ENCODE measurements at regions of chr1 and their contacts with region 1.

Region 1: GRCh38 chr1:241356519-241357365 is at the start of gene RGS7:
- DNase-seq: peak; percentile 52 to 60
- H3K4me3 ChIP-seq: peak within 1 kb of the TSS; percentile 50
- H3K4me3 Mint-ChIP-seq: peak within 1 kb of the TSS; percentile 53
- H3K27ac Mint-ChIP-seq: no peak within 1 kb of the TSS
- H3K4me1 ChIP-seq: no peaks in the 10 kb centered on the region
- H3K4me1 Mint-ChIP-seq: no peaks in the 10 kb centered on the region
- H3K27me3 ChIP-seq: peaks cover 2% of the 10 kb centered on the region
- H3K27me3 Mint-ChIP-seq: peaks cover 19% of the 10 kb centered on the region
- CTCF ChIP-seq: no peak
- total RNA-seq, gene RGS7: not detected in 2 replicates

Region 2: GRCh38 chr1:241323514-241324195 is 33.1 kb before region 1 on chr1:
- CTCF ChIA-PET with region 1: no interaction called
- POLR2A ChIA-PET with region 1: no interaction called
- intact Hi-C with region 1: loop called (anchors 1 kb)
- DNase-seq: peak; percentile 38 to 74
- H3K4me3 ChIP-seq: no peak overlapping the region
- H3K4me3 Mint-ChIP-seq: no peak overlapping the region
- H3K27ac Mint-ChIP-seq: no peak overlapping the region
- H3K4me1 ChIP-seq: no peaks in the 10 kb centered on the region
- H3K4me1 Mint-ChIP-seq: no peaks in the 10 kb centered on the region
- H3K27me3 ChIP-seq: no peaks in the 10 kb centered on the region
- H3K27me3 Mint-ChIP-seq: peaks cover 8% of the 10 kb centered on the region
- CTCF ChIP-seq: no peak

Region 3: GRCh38 chr1:241376701-241377100 is 20.0 kb after region 1 on chr1:
- CTCF ChIA-PET with region 1: no interaction called
- POLR2A ChIA-PET with region 1: no interaction called
- intact Hi-C with region 1: no loop called
- DNase-seq: no peak
- H3K4me3 ChIP-seq: no peak overlapping the region
- H3K4me3 Mint-ChIP-seq: no peak overlapping the region
- H3K27ac Mint-ChIP-seq: no peak overlapping the region
- H3K4me1 ChIP-seq: no peaks in the 10 kb centered on the region
- H3K4me1 Mint-ChIP-seq: no peaks in the 10 kb centered on the region
- H3K27me3 ChIP-seq: no peaks in the 10 kb centered on the region
- H3K27me3 Mint-ChIP-seq: peaks cover 8% of the 10 kb centered on the region
- CTCF ChIP-seq: no peak

Measured in Caco-2 (cell line).